ENCODE measurements at regions of chr19 and their contacts with region 1.

Region 1: DNA sequence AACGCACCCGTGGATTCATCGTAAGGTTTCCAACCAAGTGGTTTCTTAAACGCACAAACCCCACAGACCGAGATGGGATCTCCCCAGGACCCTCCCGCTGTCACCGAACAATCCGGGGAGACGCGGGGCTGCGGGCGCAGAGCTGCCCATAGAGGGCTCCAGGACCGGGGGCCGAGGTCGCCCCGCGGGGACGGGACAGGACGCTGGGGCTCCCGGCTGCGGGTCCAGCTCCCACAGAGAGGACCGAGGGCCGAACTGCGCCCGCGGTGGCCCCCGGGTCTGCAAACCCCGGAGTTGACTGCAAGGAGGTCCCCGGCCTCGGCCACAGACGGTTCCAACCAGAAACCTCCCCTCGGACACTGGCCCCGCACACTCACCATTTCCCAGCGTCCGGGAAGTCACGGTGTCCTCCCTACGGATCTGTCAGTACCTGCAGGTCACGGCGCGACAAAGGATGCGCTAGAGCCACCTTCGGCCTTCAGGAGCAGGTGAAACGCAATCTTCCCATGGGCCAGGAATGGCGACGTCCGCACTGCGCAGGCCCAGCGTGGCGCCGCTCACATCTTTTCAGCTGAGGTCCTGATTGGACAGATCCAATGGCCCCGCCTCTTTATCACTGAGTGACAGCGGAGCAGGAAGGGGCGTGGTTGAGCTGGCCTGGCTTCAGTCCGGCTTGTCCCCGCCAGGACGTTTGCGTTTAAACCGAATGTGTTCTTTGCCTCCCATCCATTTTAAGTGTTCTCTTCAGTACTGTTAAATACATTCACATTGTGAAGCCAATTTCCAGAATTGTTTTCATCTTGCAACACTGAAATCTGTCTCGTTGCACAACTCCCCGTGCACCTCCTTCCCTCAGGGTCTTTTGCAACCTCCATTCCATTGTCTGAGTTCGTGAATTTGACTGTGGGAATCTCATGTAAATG is at the start of gene ZNF14:
- H3K4me3 Mint-ChIP-seq: peak within 1 kb of the TSS; percentile 93
- H3K27ac Mint-ChIP-seq: peak within 1 kb of the TSS; percentile 83
- H3K4me1 Mint-ChIP-seq: peaks cover 15% of the 10 kb centered on the region
- H3K27me3 Mint-ChIP-seq: peaks cover 5% of the 10 kb centered on the region

Region 2: GRCh38 chr19:19606021-19606420 is 126.8 kb before region 1 on chr19:
- intact Hi-C with region 1: no loop called
- H3K4me3 Mint-ChIP-seq: no peak overlapping the region
- H3K27ac Mint-ChIP-seq: no peak overlapping the region
- H3K4me1 Mint-ChIP-seq: no peaks in the 10 kb centered on the region
- H3K27me3 Mint-ChIP-seq: peaks cover 2% of the 10 kb centered on the region

Region 3: GRCh38 chr19:19677579-19677978 is 55.3 kb before region 1 on chr19:
- intact Hi-C with region 1: loop called (anchors 5 kb)
- H3K4me3 Mint-ChIP-seq: no peak overlapping the region
- H3K27ac Mint-ChIP-seq: no peak overlapping the region
- H3K4me1 Mint-ChIP-seq: no peaks in the 10 kb centered on the region
- H3K27me3 Mint-ChIP-seq: no peaks in the 10 kb centered on the region

Region 4: DNA sequence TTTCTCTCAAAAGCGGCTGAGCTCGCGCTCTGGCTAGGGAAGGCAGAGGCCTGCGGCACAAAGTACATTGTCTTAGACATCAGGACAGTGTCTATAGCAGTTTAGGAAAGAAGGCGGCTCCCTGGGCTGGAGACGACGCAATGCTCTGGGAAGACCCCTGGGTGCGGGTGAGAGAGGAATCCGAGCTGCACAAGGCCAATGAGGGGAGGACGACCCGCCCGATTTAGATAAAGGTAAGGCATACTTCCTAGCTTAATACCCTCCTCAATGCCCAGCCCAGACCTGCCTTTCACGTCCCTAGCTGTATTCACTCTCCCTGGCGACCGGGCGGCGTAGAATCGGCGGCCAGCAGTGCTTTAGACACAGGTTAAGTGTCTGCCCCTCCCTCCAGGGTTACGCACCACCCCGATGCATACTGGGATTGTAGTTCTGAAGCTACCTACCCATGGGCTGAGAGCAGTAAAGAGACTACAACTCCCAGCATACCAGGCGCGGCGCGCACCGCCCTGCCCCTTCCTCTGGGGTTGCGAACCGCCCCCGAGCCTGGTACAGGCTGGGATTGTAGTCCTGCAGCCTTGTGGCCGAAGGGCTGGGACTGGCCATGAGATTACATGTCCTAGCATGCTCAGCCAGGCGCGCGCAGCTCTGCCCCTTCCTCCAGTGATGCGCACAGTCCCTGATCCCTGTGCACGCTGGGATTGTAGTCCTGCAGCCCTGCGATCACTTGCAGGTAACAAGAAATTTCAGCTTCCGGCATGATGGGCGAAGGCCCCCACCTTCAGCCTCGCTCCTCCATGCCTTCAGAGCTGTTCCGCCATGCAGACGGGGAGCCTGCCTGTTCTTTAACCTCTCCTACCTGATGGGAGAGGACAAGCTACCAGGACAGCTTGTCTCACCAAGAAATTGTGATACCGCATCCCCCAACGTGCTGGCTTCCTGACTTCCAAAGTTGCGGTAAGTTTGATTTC is 43.5 kb after region 1 on chr19:
- intact Hi-C with region 1: loop called (anchors 1 kb)
- H3K4me3 Mint-ChIP-seq: peak overlapping the region; percentile 93
- H3K27ac Mint-ChIP-seq: peak overlapping the region; percentile 88
- H3K4me1 Mint-ChIP-seq: peaks cover 33% of the 10 kb centered on the region
- H3K27me3 Mint-ChIP-seq: no peaks in the 10 kb centered on the region

Region 5: DNA sequence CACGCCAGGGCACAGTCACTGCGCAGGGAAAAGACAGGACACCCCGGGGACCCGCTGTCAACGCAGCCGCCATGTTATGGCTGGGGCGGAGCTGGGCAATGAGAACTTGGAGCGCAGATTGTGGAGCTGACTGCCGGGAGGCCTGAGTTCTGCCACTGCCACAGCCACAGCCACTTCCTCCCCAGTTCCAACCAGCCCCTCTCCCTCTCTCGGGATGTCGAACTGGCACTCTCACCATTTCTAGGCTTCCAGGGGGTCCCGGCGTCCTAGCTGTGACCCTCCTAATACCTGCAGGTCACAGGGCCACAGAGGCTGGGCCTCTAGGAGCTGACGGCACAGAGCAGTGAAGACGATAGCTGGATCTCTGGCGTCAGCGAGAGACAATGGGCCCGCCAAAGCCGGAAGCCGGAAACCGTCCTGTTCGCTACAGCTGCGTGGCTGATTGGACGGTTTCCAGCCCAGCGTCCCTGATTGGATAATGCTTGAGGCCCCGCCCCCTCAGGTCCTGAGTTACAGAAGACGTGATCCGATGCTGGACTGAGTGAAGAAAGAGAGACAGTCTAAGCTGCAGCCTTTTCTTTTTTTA is 88.6 kb after region 1 on chr19 and contains the start of gene ZNF506:
- intact Hi-C with region 1: no loop called
- H3K4me3 Mint-ChIP-seq: peak within 1 kb of the TSS; percentile 97
- H3K27ac Mint-ChIP-seq: peak within 1 kb of the TSS; percentile 98
- H3K4me1 Mint-ChIP-seq: peaks cover 8% of the 10 kb centered on the region
- H3K27me3 Mint-ChIP-seq: no peaks in the 10 kb centered on the region

Region 6: GRCh38 chr19:19943848-19944582 is 211.2 kb after region 1 on chr19:
- intact Hi-C with region 1: no loop called
- H3K4me3 Mint-ChIP-seq: no peak overlapping the region
- H3K27ac Mint-ChIP-seq: no peak overlapping the region
- H3K4me1 Mint-ChIP-seq: no peaks in the 10 kb centered on the region
- H3K27me3 Mint-ChIP-seq: no peaks in the 10 kb centered on the region

Measured in dendritic cell treated with granulocyte-macrophage colony-stimulating factor and Interleukin-4, amounts not matched to agents 40 ng/mL and 50 ng/mL, for 4 days (primary cell).